H1 (cell line): ENCODE measurements at regions of chr2 and their contacts with region 1.

Region 1: GRCh38 chr2:120693121-120693520 is 42.5 kb upstream of the GLI2 start:
- DNase-seq: no peak
- H3K4me3 ChIP-seq: no peak overlapping the region
- H3K27ac ChIP-seq: no peak overlapping the region
- H3K4me1 ChIP-seq: peaks cover 4 to 7% (median 6%) of the 10 kb centered on the region in 4 experiments; a peak in 6 of 7 replicates
- H3K27me3 ChIP-seq: peaks cover 0 to 21% (median 18%) of the 10 kb centered on the region in 4 experiments; a peak in 5 of 7 replicates
- CTCF ChIP-seq: no peak
- EP300 ChIP-seq: no peak
- POLR2A ChIP-seq: no peak
- RAD21 ChIP-seq: no peak

Region 2: GRCh38 chr2:120680136-120680761 is 12.9 kb before region 1 on chr2:
- CTCF ChIA-PET with region 1: interaction called, 29 read pairs
- POLR2A ChIA-PET with region 1: no interaction called
- DNase-seq: peak in 1 of 2 experiments; percentile 91
- H3K4me3 ChIP-seq: no peak overlapping the region
- H3K27ac ChIP-seq: no peak overlapping the region
- H3K4me1 ChIP-seq: no peaks in the 10 kb centered on the region
- H3K27me3 ChIP-seq: peaks cover 0 to 14% (median 6%) of the 10 kb centered on the region in 4 experiments; a peak in 3 of 7 replicates
- CTCF ChIP-seq: peak; percentile 78 to 79 (median 78)
- EP300 ChIP-seq: no peak
- POLR2A ChIP-seq: no peak
- RAD21 ChIP-seq: peak; percentile 86 to 91

Region 3: GRCh38 chr2:120771111-120771947 is 78.2 kb after region 1 on chr2:
- CTCF ChIA-PET with region 1: interaction called, 11 read pairs
- POLR2A ChIA-PET with region 1: no interaction called
- DNase-seq: no peak
- H3K4me3 ChIP-seq: no peak overlapping the region
- H3K27ac ChIP-seq: no peak overlapping the region
- H3K4me1 ChIP-seq: peaks cover 20 to 58% (median 30%) of the 10 kb centered on the region in 4 experiments
- H3K27me3 ChIP-seq: no peaks in the 10 kb centered on the region
- CTCF ChIP-seq: no peak
- EP300 ChIP-seq: no peak
- POLR2A ChIP-seq: no peak
- RAD21 ChIP-seq: no peak

Region 4: DNA sequence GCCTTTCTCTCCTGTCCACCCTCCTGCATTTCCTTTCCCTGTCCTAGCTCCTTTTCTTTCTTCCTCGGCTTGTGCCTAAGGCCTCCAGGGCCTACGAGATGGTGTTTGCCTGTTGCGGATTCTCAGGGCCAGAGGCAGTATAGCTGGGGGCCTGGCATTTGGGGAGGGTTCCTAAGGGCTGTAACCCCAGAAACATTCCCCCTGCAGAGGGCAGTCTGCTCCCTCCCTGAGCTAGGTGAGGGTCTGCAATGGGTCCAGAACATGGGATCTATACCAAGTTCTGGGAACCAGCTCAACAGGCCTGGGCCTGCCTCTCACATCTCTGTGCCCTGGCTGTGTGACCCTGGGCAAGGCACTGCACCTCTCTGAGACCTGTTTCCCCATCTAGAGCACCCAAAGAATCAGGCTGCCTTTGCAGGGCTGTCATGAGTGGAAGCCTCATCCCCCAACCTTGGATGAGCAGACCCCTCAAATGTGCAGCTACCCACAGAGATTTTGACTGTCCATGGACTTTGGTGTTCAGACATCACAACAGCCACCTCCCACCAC is 140.1 kb after region 1 on chr2:
- CTCF ChIA-PET with region 1: interaction called, 14 read pairs
- POLR2A ChIA-PET with region 1: no interaction called
- DNase-seq: no peak
- H3K4me3 ChIP-seq: no peak overlapping the region
- H3K27ac ChIP-seq: no peak overlapping the region
- H3K4me1 ChIP-seq: peaks cover 2 to 16% (median 8%) of the 10 kb centered on the region in 4 experiments; a peak in 6 of 7 replicates
- H3K27me3 ChIP-seq: no peaks in the 10 kb centered on the region
- CTCF ChIP-seq: peak in 2 of 3 experiments; percentile 42; a peak in 3 of 4 replicates
- EP300 ChIP-seq: no peak
- POLR2A ChIP-seq: no peak
- RAD21 ChIP-seq: peak; percentile 53 to 67; a peak in 3 of 4 replicates

Region 5: DNA sequence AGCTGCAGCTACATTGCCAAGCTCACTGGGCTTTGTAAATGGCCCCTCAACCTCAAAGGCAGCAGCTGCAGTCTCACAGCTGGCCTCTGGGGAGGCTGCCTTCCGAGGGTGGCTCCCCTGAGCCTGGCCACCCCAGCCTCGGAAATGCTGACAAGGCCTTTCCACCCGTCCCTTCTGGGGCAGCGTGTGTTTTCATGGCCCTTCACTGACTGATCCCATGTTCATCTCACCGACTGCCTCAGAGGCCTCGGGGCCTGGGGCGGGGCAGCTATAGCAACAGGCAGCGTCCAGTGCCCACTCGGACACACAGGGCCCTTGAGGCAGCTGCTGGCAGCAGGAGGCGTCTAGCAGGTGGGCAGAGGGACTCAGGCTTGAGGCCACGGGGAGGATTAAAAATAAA is 192.2 kb after region 1 on chr2:
- CTCF ChIA-PET with region 1: interaction called, 17 read pairs
- POLR2A ChIA-PET with region 1: no interaction called
- DNase-seq: no peak
- H3K4me3 ChIP-seq: no peak overlapping the region
- H3K27ac ChIP-seq: no peak overlapping the region
- H3K4me1 ChIP-seq: peaks cover 0 to 16% (median 11%) of the 10 kb centered on the region in 4 experiments; a peak in 6 of 7 replicates
- H3K27me3 ChIP-seq: no peaks in the 10 kb centered on the region
- CTCF ChIP-seq: peak in 2 of 3 experiments; percentile 45 to 48; a peak in 3 of 4 replicates
- EP300 ChIP-seq: no peak
- POLR2A ChIP-seq: no peak
- RAD21 ChIP-seq: peak; percentile 12 to 28; a peak in 2 of 4 replicates

Region 6: DNA sequence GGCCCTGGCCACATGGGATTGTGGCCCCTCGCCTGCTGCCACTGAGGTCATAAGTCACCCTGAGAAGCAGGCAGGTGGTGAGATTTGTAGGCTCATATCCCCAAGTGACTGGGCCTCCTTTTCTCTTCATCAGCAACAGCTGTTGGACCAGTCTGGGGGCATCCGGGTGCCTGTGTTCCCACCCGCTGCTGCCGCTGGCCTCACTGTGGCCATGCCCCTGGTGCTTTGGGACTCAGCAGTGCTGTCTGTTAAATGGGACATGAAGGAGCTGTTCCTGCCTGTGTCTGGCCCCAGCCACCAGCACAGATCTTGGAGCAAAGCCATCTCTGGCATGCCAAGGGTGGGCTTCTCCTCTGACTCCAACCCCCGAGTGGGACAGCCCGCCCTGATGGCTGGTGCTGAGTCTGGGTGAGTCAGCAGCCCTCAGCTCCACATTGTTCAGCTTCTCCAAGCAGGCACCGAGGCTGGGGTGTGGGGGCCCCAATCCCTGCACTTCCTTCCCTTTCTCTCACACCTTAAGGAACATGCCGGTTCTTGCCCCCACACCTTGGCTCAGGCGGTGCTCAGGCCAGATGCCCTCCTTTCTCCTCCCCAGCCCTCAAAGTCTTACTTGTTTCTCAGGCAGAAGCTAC is 250.4 kb after region 1 on chr2:
- CTCF ChIA-PET with region 1: interaction called, 21 read pairs
- POLR2A ChIA-PET with region 1: no interaction called
- DNase-seq: no peak
- H3K4me3 ChIP-seq: no peak overlapping the region
- H3K27ac ChIP-seq: no peak overlapping the region
- H3K4me1 ChIP-seq: peaks cover 0 to 3% (median 0%) of the 10 kb centered on the region in 4 experiments; a peak in 1 of 7 replicates
- H3K27me3 ChIP-seq: no peaks in the 10 kb centered on the region
- CTCF ChIP-seq: no peak
- EP300 ChIP-seq: no peak
- POLR2A ChIP-seq: no peak
- RAD21 ChIP-seq: no peak

Region 7: DNA sequence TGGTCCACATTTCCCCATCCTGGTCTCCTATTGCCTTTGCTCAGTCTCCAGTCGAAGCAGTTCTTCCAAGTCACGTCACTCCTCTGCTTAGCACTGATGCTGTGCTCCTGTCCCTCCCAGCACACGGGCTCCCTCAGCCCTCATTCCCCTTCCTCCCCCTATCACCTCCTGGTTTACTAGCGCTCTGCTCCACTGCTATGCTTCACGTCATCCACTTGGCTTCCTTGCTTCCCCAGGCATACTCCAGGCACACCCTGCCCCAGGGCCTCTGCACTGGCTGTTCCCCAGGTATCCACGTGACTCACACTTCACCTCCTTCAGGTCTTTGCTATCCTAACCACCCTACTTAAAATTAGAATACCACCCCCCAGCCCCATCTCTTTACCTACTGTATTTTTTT is 311.8 kb after region 1 on chr2:
- CTCF ChIA-PET with region 1: interaction called, 13 read pairs
- POLR2A ChIA-PET with region 1: no interaction called
- DNase-seq: no peak
- H3K4me3 ChIP-seq: no peak overlapping the region
- H3K27ac ChIP-seq: no peak overlapping the region
- H3K4me1 ChIP-seq: peaks cover 3 to 9% (median 7%) of the 10 kb centered on the region in 4 experiments
- H3K27me3 ChIP-seq: peaks cover 0 to 13% (median 3%) of the 10 kb centered on the region in 4 experiments; a peak in 4 of 7 replicates
- CTCF ChIP-seq: no peak
- EP300 ChIP-seq: no peak
- POLR2A ChIP-seq: no peak
- RAD21 ChIP-seq: no peak